ENCODE measurements at regions of chr3 and their contacts with region 1.

Region 1: DNA sequence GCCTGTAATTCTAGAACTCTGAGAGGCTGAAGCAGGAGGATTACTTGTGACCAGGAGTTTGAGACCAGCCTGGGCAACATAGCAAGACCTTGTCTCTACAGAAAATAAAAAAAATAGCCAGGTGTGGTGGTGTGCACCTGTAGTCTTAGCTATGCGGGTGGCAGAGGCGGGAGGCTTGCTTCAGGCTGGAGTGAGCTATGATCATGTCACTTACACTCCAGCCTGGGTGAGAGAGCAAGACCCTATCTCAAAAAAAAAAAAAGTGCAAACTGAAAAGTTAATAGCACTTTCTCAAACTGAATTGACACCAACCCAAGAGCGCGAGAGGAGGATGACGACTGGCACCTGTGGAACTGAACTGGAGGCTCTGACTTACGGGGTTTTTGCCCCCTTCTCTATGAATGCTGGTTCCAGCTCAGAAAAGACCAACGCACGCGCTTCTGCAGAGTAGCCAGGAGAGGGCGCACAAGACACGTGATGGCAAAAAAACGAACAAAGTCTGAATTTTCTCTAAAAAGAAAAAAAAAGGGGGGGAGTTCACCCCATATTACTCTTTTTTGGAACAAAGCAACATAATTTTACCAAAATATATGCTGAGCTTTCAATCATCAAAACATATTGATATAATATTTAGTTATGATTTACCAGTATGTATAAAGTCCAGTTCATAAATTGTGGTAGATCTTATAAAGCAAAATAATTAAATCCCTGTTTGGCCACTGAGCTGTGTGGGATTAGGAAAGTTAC is 23.7 kb downstream of the CFAP92 start:
- DNase-seq: peak; percentile 77
- ATAC-seq: peak; percentile 77
- H3K4me3 Mint-ChIP-seq: no peak overlapping the region
- H3K27ac Mint-ChIP-seq: no peak overlapping the region
- H3K4me1 Mint-ChIP-seq: peaks cover 13% of the 10 kb centered on the region
- H3K27me3 Mint-ChIP-seq: peaks cover 8% of the 10 kb centered on the region

Region 2: GRCh38 chr3:128780101-128780837 is 189.9 kb before region 1 on chr3:
- CTCF ChIA-PET with region 1: no interaction called
- DNase-seq: no peak
- ATAC-seq: no peak
- H3K4me3 Mint-ChIP-seq: no peak overlapping the region
- H3K27ac Mint-ChIP-seq: no peak overlapping the region
- H3K4me1 Mint-ChIP-seq: peaks cover 58% of the 10 kb centered on the region
- H3K27me3 Mint-ChIP-seq: no peaks in the 10 kb centered on the region

Region 3: GRCh38 chr3:128884992-128885391 is 85.2 kb before region 1 on chr3:
- CTCF ChIA-PET with region 1: no interaction called
- DNase-seq: no peak
- ATAC-seq: no peak
- H3K4me3 Mint-ChIP-seq: no peak overlapping the region
- H3K27ac Mint-ChIP-seq: peak overlapping the region; percentile 56
- H3K4me1 Mint-ChIP-seq: peaks cover 44% of the 10 kb centered on the region
- H3K27me3 Mint-ChIP-seq: no peaks in the 10 kb centered on the region

Region 4: DNA sequence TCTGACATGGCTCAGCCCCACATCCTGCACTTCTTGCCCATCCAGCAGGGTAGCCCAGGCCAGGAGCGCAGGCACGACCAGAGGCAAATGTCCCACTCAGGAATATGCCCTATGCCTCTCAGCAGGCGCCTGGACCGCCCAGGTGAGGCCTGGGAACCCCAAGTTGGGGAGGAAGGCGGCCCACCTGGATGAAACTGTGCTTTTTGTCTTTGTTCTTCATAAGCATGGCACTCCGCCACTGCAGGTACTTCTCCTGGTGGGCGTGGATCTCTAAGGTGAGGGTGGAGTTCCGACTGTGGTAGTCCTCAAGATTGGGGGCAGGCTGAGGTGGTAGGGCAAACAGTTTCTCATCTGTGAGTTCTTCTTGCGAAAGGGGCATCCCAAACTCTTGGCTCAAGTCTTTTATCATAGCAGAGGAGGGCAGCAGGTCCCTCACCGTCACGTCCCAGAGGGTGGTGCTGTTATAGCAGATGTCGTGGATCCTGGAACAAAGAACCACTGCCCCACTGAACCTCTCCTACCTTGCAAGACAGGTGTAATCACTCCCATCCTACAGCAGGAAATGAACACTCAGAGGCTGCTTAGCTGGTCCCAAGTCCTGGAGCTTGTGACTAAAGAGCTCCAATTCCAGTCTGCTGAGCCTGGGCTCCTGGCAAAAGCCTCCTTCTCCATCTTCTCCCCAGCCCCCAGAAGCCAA is 37.5 kb before region 1 on chr3:
- CTCF ChIA-PET with region 1: interaction called, 11 read pairs
- DNase-seq: peak; percentile 15
- ATAC-seq: no peak
- H3K4me3 Mint-ChIP-seq: no peak overlapping the region
- H3K27ac Mint-ChIP-seq: no peak overlapping the region
- H3K4me1 Mint-ChIP-seq: no peaks in the 10 kb centered on the region
- H3K27me3 Mint-ChIP-seq: peaks cover 24% of the 10 kb centered on the region

Region 5: GRCh38 chr3:128993461-128994173 is 23.5 kb after region 1 on chr3 and contains the start of gene CFAP92:
- CTCF ChIA-PET with region 1: interaction called, 12 read pairs
- DNase-seq: peak; percentile 94
- ATAC-seq: peak; percentile 100
- H3K4me3 Mint-ChIP-seq: peak within 1 kb of the TSS; percentile 40
- H3K27ac Mint-ChIP-seq: peak within 1 kb of the TSS; percentile 44
- H3K4me1 Mint-ChIP-seq: peaks cover 14% of the 10 kb centered on the region
- H3K27me3 Mint-ChIP-seq: peaks cover 18% of the 10 kb centered on the region
- total RNA-seq, gene CFAP92: 0.12 TPM in 1 of 2 experiments, not detected in the other

Region 6: GRCh38 chr3:129026728-129027543 is 56.8 kb after region 1 on chr3:
- CTCF ChIA-PET with region 1: interaction called, 25 read pairs
- DNase-seq: peak; percentile 97
- ATAC-seq: peak; percentile 100
- H3K4me3 Mint-ChIP-seq: peak overlapping the region; percentile 80
- H3K27ac Mint-ChIP-seq: peak overlapping the region; percentile 96
- H3K4me1 Mint-ChIP-seq: peaks cover 24% of the 10 kb centered on the region
- H3K27me3 Mint-ChIP-seq: peaks cover 6% of the 10 kb centered on the region

Region 7: GRCh38 chr3:129068291-129068886 is 98.2 kb after region 1 on chr3:
- CTCF ChIA-PET with region 1: interaction called, 12 read pairs
- DNase-seq: no peak
- ATAC-seq: peak; percentile 62
- H3K4me3 Mint-ChIP-seq: peak overlapping the region; percentile 53
- H3K27ac Mint-ChIP-seq: no peak overlapping the region
- H3K4me1 Mint-ChIP-seq: peaks cover 7% of the 10 kb centered on the region
- H3K27me3 Mint-ChIP-seq: peaks cover 15% of the 10 kb centered on the region

Region 8: GRCh38 chr3:129160891-129161859 is 191.0 kb after region 1 on chr3 and contains the start of gene ISY1:
- CTCF ChIA-PET with region 1: interaction called, 21 read pairs
- DNase-seq: peak; percentile 93
- ATAC-seq: peak; percentile 84
- H3K4me3 Mint-ChIP-seq: peak within 1 kb of the TSS; percentile 92
- H3K27ac Mint-ChIP-seq: peak within 1 kb of the TSS; percentile 97
- H3K4me1 Mint-ChIP-seq: peaks cover 31% of the 10 kb centered on the region
- H3K27me3 Mint-ChIP-seq: no peaks in the 10 kb centered on the region
- total RNA-seq, gene ISY1: 44.4 to 75.9 TPM

Region 9: DNA sequence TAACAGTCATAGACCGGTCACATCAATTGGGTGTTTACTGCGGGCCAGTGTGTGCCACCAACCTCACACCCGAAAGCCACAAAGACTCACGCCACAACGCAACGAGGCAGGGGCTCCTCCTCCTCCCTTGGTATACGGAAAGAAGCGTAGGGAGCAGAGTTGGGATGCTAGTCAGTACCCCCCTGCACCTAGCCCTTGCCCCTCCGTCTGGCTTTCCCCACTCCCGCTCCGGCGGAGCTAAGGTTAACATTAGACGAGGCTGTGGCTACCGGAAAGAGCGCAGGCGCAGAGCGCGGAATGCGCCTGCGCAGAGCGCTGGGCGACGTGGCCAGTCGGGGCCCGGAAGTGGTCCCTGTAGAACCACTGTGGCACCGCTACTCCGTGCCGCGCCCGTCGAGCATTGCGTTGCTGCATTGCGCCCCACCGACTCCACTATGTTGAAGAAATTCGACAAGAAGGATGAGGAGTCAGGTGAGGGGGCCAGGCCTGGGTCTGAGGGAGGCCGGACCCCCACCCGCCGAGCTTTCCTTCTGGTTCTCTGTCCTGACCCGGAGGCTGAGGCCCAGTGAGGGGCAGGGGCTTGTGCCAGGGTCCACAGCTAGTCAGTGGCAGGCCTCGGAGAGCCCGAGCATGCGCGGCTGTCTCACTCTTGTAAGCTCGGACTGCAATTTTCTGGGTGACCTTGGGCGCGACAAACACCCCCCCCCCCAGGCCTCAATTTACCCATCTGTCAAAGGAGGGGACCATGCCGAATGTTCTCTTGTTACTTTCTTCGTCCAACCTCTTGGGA is 279.3 kb after region 1 on chr3 and contains the start of gene COPG1:
- CTCF ChIA-PET with region 1: interaction called, 45 read pairs
- DNase-seq: peak; percentile 91
- ATAC-seq: peak; percentile 91
- H3K4me3 Mint-ChIP-seq: peak within 1 kb of the TSS; percentile 94
- H3K27ac Mint-ChIP-seq: peak within 1 kb of the TSS; percentile 94
- H3K4me1 Mint-ChIP-seq: peaks cover 48% of the 10 kb centered on the region
- H3K27me3 Mint-ChIP-seq: no peaks in the 10 kb centered on the region
- total RNA-seq, gene COPG1: 130 to 141 TPM